Caco-2 (cell line): ENCODE measurements at regions of chr2 and their contacts with region 1.

Region 1: GRCh38 chr2:30208452-30208851 is 22.9 kb upstream of the LBH start:
- DNase-seq: peak; percentile 75
- H3K4me3 ChIP-seq: no peak overlapping the region
- H3K4me3 Mint-ChIP-seq: no peak overlapping the region
- H3K27ac Mint-ChIP-seq: no peak overlapping the region
- H3K4me1 ChIP-seq: peaks cover 6% of the 10 kb centered on the region; the same call in 1 of the 2 replicates
- H3K4me1 Mint-ChIP-seq: peaks cover 22% of the 10 kb centered on the region
- H3K27me3 ChIP-seq: no peaks in the 10 kb centered on the region
- H3K27me3 Mint-ChIP-seq: no peaks in the 10 kb centered on the region
- CTCF ChIP-seq: peak; percentile 91 to 94

Region 2: GRCh38 chr2:29987146-29987545 is 221.3 kb before region 1 on chr2:
- CTCF ChIA-PET with region 1: no interaction called
- POLR2A ChIA-PET with region 1: no interaction called
- intact Hi-C with region 1: no loop called
- DNase-seq: no peak
- H3K4me3 ChIP-seq: no peak overlapping the region
- H3K4me3 Mint-ChIP-seq: no peak overlapping the region
- H3K27ac Mint-ChIP-seq: no peak overlapping the region
- H3K4me1 ChIP-seq: no peaks in the 10 kb centered on the region
- H3K4me1 Mint-ChIP-seq: no peaks in the 10 kb centered on the region
- H3K27me3 ChIP-seq: no peaks in the 10 kb centered on the region
- H3K27me3 Mint-ChIP-seq: peaks cover 3% of the 10 kb centered on the region
- CTCF ChIP-seq: no peak

Region 3: GRCh38 chr2:30098266-30099005 is 110.0 kb before region 1 on chr2:
- CTCF ChIA-PET with region 1: no interaction called
- POLR2A ChIA-PET with region 1: no interaction called
- intact Hi-C with region 1: no loop called
- DNase-seq: no peak
- H3K4me3 ChIP-seq: no peak overlapping the region
- H3K4me3 Mint-ChIP-seq: no peak overlapping the region
- H3K27ac Mint-ChIP-seq: no peak overlapping the region
- H3K4me1 ChIP-seq: no peaks in the 10 kb centered on the region
- H3K4me1 Mint-ChIP-seq: no peaks in the 10 kb centered on the region
- H3K27me3 ChIP-seq: 0 out of 2 replicates have a peak, but pooled peaks cover 1% of the 10 kb centered on the region
- H3K27me3 Mint-ChIP-seq: peaks cover 25% of the 10 kb centered on the region
- CTCF ChIP-seq: no peak

Region 4: GRCh38 chr2:30231212-30231995 is 23.0 kb after region 1 on chr2 and contains the start of gene LBH:
- CTCF ChIA-PET with region 1: interaction called, 17 read pairs
- POLR2A ChIA-PET with region 1: interaction called, 3 read pairs
- intact Hi-C with region 1: loop called (anchors 1 kb)
- DNase-seq: peak; percentile 87 to 91
- H3K4me3 ChIP-seq: peak within 1 kb of the TSS; percentile 60
- H3K4me3 Mint-ChIP-seq: peak within 1 kb of the TSS; percentile 94
- H3K27ac Mint-ChIP-seq: peak within 1 kb of the TSS; percentile 67
- H3K4me1 ChIP-seq: peaks cover 28% of the 10 kb centered on the region
- H3K4me1 Mint-ChIP-seq: peaks cover 30% of the 10 kb centered on the region
- H3K27me3 ChIP-seq: no peaks in the 10 kb centered on the region
- H3K27me3 Mint-ChIP-seq: no peaks in the 10 kb centered on the region
- CTCF ChIP-seq: peak in 1 of 2 experiments; percentile 10
- total RNA-seq, gene LBH: 126 and 159 TPM in 2 replicates

Region 5: DNA sequence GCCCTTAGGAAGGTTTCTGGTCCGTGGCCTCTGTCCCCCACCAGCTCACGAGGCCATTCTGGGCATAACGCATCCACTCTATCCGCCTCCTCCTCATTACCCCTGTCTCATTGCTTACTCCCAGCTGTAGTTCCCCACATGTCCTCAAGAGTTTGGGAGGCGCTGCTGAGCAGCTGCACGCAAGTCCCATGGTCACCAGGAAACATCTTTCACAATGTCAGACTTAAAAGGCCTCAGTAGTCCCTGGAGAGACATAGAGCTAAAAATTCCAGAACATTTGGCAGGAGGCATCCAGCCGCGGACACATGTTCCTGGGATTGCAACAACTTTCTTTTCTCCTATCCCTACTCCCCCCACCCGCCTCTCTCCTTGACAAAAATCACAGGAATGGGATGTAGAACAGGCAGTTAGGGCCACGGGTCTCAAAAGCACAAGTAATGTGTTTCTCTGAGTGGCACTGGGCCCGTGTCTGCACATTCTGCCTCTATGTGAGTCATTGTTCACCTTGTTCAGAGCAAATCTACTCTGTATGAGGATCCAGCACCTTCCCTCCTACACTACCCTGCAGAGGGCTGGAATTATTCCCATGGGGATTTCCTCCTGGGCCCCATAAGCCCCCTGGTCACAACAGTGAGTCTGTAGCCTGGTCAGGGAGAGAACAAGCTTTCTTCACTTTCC is 31.0 kb after region 1 on chr2:
- CTCF ChIA-PET with region 1: interaction called, 14 read pairs
- POLR2A ChIA-PET with region 1: interaction called, 8 read pairs
- intact Hi-C with region 1: no loop called
- DNase-seq: peak; percentile 79 to 86
- H3K4me3 ChIP-seq: no peak overlapping the region
- H3K4me3 Mint-ChIP-seq: no peak overlapping the region
- H3K27ac Mint-ChIP-seq: peak overlapping the region; percentile 48
- H3K4me1 ChIP-seq: peaks cover 7% of the 10 kb centered on the region; the same call in 1 of the 2 replicates
- H3K4me1 Mint-ChIP-seq: peaks cover 11% of the 10 kb centered on the region
- H3K27me3 ChIP-seq: no peaks in the 10 kb centered on the region
- H3K27me3 Mint-ChIP-seq: no peaks in the 10 kb centered on the region
- CTCF ChIP-seq: peak; percentile 79 to 95

Region 6: DNA sequence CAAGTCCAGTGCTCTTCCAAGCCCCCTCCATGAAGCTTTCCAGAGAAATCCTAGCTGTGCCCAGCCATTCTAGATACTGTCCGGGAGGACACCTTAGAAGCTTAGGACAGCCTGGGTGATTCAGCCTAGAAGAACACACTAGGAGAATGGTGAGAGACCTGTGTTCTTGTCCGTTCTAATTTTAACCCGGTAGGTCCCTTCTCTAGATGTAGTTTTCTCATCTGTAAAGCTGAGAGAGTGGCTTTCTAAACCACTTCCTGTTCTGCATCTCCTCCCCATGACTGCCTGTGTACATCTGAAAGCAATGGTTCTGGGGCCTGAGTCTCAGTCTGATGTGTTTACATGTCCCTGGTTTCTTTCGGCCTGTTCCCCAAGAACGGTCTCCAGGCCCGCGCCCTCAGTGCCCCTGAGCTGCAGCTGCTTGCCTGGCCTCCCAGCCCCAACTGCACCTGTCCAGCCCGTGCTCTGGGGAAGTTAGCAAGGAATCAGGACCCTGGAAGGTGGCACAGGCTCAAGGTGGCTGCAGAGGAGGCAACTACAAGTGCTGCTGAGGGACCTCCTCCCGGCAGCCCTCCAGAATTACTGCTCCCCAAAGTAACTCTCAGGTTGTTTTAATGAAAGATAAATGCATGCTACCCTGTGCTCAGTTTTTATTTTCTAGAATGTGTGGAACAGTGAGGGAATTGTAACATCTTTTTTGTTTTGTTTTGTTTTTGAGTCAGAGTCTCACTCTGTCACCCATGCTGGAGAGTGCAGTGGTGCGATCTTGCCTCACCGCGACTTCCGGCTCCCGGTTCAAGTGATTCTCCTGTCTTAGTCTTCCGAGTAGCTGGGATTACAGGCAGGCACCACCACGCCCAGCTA is 128.8 kb after region 1 on chr2:
- CTCF ChIA-PET with region 1: interaction called, 10 read pairs
- POLR2A ChIA-PET with region 1: no interaction called
- intact Hi-C with region 1: loop called (anchors 2 kb)
- DNase-seq: no peak
- H3K4me3 ChIP-seq: no peak overlapping the region
- H3K4me3 Mint-ChIP-seq: no peak overlapping the region
- H3K27ac Mint-ChIP-seq: peak overlapping the region; percentile 53
- H3K4me1 ChIP-seq: peaks cover 18% of the 10 kb centered on the region; the same call in 1 of the 2 replicates
- H3K4me1 Mint-ChIP-seq: peaks cover 12% of the 10 kb centered on the region
- H3K27me3 ChIP-seq: no peaks in the 10 kb centered on the region
- H3K27me3 Mint-ChIP-seq: no peaks in the 10 kb centered on the region
- CTCF ChIP-seq: no peak

Region 7: GRCh38 chr2:30447149-30448045 is 238.9 kb after region 1 on chr2 and contains the start of gene LCLAT1:
- CTCF ChIA-PET with region 1: interaction called, 3 read pairs
- POLR2A ChIA-PET with region 1: no interaction called
- intact Hi-C with region 1: loop called (anchors 2 kb)
- DNase-seq: peak; percentile 80 to 88
- H3K4me3 ChIP-seq: peak within 1 kb of the TSS; percentile 90
- H3K4me3 Mint-ChIP-seq: peak within 1 kb of the TSS; percentile 97
- H3K27ac Mint-ChIP-seq: peak within 1 kb of the TSS; percentile 100
- H3K4me1 ChIP-seq: peaks cover 12% of the 10 kb centered on the region; the same call in 1 of the 2 replicates
- H3K4me1 Mint-ChIP-seq: peaks cover 6% of the 10 kb centered on the region
- H3K27me3 ChIP-seq: no peaks in the 10 kb centered on the region
- H3K27me3 Mint-ChIP-seq: no peaks in the 10 kb centered on the region
- CTCF ChIP-seq: peak in 1 of 2 experiments; percentile 2
- total RNA-seq, gene LCLAT1: 52.2 and 55.8 TPM in 2 replicates

Region 8: DNA sequence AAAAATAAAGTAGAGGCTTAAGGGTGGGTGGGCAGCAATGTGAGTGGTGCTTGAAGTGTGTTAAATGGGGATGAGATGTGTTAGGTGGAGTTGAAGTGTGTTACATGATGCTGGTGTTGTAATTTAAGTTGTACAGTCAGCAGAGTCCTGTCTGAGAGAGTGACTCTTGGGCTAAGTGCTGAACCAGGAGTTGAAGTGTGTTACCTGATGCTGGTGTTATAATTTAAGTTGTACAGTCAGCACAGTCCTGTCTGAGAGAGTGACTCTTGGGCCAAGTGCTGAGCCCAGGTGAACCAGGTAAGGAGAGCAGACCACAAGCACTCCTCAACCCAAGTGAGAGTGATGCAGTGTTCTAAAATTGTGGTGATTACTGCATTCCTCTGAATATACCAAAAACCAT is 279.2 kb after region 1 on chr2:
- CTCF ChIA-PET with region 1: no interaction called
- POLR2A ChIA-PET with region 1: no interaction called
- intact Hi-C with region 1: no loop called
- DNase-seq: no peak
- H3K4me3 ChIP-seq: no peak overlapping the region
- H3K4me3 Mint-ChIP-seq: no peak overlapping the region
- H3K27ac Mint-ChIP-seq: no peak overlapping the region
- H3K4me1 ChIP-seq: no peaks in the 10 kb centered on the region
- H3K4me1 Mint-ChIP-seq: peaks cover 7% of the 10 kb centered on the region
- H3K27me3 ChIP-seq: no peaks in the 10 kb centered on the region
- H3K27me3 Mint-ChIP-seq: no peaks in the 10 kb centered on the region
- CTCF ChIP-seq: no peak